CD8-positive, alpha-beta T cell (primary cell): ENCODE measurements at regions of chr16 and their contacts with region 1.

Region 1: DNA sequence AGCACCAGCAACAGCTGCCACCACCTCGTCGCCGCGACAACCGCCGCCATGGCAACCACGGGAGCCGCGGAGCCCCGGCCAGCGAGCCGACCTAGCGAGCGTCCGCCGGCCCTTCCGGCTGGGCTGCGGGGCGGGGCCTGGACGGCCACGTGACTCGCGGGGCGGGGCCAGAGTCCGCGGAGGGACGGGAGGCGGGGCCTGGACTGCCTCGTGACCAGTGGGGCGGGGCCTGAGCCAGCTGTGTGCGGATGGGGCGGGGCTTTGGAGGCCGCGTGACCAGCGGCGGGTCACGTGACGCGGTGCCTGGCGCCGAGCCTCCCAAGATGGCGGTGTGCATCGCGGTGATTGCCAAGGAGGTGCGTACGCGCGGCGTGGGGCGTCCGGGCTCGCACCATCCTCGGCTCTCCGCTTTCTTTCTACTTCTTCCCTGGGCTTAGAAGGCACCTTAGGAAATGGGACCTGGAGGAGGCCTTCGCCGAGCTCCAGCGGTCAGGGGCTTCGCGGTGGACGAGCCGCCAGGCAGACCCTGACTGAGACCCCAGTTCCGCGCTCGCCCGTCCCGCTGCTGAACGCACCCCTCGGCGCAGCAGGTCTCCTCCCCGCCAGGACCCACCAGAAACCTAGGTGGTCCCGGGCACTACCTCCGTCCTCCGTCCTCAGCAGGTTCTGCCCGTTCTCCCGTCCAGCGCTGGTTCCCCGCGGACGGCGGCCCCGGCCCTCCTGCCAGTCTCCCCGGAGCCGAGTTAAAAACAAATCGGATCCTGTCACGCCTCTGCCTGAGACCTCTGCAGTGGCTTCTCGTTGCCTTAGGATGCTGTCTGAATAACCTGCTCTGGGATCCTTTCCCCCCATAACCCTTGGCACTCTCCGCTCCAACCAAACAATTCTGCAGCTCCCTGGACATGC is at the starts of genes GALNS and TRAPPC2L:
- DNase-seq: peak; percentile 97 to 100 (median 99)
- ATAC-seq: peak; percentile 88
- H3K4me3 ChIP-seq: peak within 1 kb of the TSS; percentile 91 to 97
- H3K4me3 Mint-ChIP-seq: peak within 1 kb of the TSS; percentile 98
- H3K27ac ChIP-seq: peak within 1 kb of the TSS; percentile 74 to 83
- H3K27ac Mint-ChIP-seq: peak within 1 kb of the TSS; percentile 92
- H3K4me1 ChIP-seq: peaks cover 33% of the 10 kb centered on the region
- H3K4me1 Mint-ChIP-seq: peaks cover 39% of the 10 kb centered on the region
- H3K27me3 ChIP-seq: no peaks in the 10 kb centered on the region
- H3K27me3 Mint-ChIP-seq: no peaks in the 10 kb centered on the region
- CTCF ChIP-seq: no peak
- total RNA-seq, gene GALNS: 16.0 to 20.0 TPM
- total RNA-seq, gene TRAPPC2L: 53.4 to 56.5 TPM

Region 2: DNA sequence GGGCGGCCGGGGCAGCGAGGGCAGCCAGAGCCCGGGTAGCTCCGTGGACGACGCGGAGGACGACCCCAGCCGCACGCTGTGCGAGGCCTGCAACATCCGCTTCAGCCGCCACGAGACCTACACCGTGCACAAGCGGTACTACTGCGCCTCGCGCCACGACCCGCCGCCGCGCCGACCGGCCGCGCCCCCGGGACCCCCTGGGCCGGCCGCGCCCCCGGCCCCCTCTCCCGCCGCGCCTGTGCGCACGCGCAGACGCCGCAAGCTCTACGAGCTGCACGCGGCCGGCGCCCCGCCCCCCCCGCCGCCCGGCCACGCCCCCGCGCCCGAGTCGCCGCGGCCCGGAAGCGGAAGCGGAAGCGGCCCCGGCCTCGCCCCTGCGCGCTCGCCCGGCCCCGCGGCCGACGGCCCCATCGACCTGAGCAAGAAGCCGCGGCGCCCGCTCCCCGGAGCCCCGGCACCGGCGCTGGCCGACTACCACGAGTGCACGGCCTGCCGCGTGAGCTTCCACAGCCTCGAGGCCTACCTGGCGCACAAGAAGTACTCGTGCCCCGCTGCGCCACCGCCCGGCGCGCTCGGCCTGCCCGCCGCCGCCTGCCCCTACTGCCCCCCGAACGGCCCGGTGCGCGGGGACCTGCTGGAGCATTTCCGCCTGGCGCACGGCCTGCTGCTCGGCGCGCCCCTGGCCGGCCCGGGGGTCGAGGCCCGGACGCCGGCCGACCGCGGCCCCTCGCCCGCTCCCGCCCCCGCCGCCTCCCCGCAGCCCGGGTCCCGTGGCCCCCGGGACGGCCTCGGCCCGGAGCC is 322.9 kb before region 1 on chr16:
- CTCF ChIA-PET with region 1: no interaction called
- POLR2A ChIA-PET with region 1: no interaction called
- intact Hi-C with region 1: loop called in 1 of 2 experiments (anchors 2 kb)
- DNase-seq: peak; percentile 59 to 92 (median 76)
- ATAC-seq: peak; percentile 70
- H3K4me3 ChIP-seq: peak overlapping the region; percentile 15 to 57
- H3K4me3 Mint-ChIP-seq: peak overlapping the region; percentile 64
- H3K27ac ChIP-seq: peak overlapping the region in 1 of 2 experiments; percentile 58
- H3K27ac Mint-ChIP-seq: no peak overlapping the region
- H3K4me1 ChIP-seq: peaks cover 8% of the 10 kb centered on the region
- H3K4me1 Mint-ChIP-seq: peaks cover 15% of the 10 kb centered on the region
- H3K27me3 ChIP-seq: no peaks in the 10 kb centered on the region
- H3K27me3 Mint-ChIP-seq: no peaks in the 10 kb centered on the region
- CTCF ChIP-seq: no peak

Region 3: GRCh38 chr16:88737298-88738150 is 119.6 kb before region 1 on chr16:
- CTCF ChIA-PET with region 1: interaction called, 23 read pairs
- POLR2A ChIA-PET with region 1: no interaction called
- intact Hi-C with region 1: loop called in 1 of 2 experiments (anchors 1 kb)
- DNase-seq: peak; percentile 34 to 88 (median 59)
- ATAC-seq: peak; percentile 97
- H3K4me3 ChIP-seq: no peak overlapping the region
- H3K4me3 Mint-ChIP-seq: no peak overlapping the region
- H3K27ac ChIP-seq: no peak overlapping the region
- H3K27ac Mint-ChIP-seq: no peak overlapping the region
- H3K4me1 ChIP-seq: peaks cover 6% of the 10 kb centered on the region
- H3K4me1 Mint-ChIP-seq: peaks cover 2% of the 10 kb centered on the region
- H3K27me3 ChIP-seq: no peaks in the 10 kb centered on the region
- H3K27me3 Mint-ChIP-seq: no peaks in the 10 kb centered on the region
- CTCF ChIP-seq: peak; percentile 95

Region 4: DNA sequence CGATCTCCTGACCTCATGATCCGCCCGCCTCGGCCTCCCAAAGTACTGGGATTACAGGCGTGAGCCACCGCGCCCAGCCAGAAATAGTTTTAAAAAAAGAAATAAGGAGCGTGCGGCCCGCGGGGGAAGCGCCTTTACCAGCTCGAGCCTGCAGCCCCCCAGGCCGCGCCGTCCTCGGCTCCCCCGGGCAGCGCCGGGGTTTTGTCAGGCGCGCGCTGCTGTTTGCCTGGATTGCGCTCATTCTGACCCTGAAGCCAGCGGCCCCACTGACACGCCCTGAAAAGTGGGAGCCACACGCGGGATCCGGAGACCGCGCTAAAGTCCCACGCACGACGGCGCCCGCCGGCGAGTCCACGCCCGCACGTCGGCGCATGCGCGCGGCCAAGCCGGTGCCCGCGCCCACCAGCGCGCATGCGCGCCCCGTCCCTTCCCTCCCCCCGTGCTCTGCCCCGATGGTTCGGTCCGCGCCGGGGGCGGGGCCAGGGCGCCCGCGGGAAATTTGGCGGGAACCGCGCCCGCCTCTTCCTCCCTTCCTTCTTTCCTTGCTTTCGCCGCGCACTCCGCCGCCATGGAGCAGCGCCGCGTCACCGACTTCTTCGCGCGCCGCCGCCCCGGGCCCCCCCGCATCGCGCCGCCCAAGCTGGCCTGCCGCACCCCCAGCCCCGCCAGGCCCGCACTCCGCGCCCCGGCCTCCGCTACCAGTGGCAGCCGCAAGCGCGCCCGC is 53.7 kb before region 1 on chr16 and contains the start of gene CDT1:
- CTCF ChIA-PET with region 1: no interaction called
- POLR2A ChIA-PET with region 1: interaction called, 4 read pairs
- intact Hi-C with region 1: loop called in 1 of 2 experiments (anchors 2 kb)
- DNase-seq: peak; percentile 70 to 94 (median 85)
- ATAC-seq: peak; percentile 68
- H3K4me3 ChIP-seq: peak within 1 kb of the TSS; percentile 59 to 65
- H3K4me3 Mint-ChIP-seq: peak within 1 kb of the TSS; percentile 84
- H3K27ac ChIP-seq: peak within 1 kb of the TSS; percentile 44 to 59
- H3K27ac Mint-ChIP-seq: peak within 1 kb of the TSS; percentile 72
- H3K4me1 ChIP-seq: peaks cover 26% of the 10 kb centered on the region
- H3K4me1 Mint-ChIP-seq: peaks cover 20% of the 10 kb centered on the region
- H3K27me3 ChIP-seq: no peaks in the 10 kb centered on the region
- H3K27me3 Mint-ChIP-seq: no peaks in the 10 kb centered on the region
- CTCF ChIP-seq: no peak
- total RNA-seq, gene CDT1: 1.2 to 2.3 TPM

Region 5: DNA sequence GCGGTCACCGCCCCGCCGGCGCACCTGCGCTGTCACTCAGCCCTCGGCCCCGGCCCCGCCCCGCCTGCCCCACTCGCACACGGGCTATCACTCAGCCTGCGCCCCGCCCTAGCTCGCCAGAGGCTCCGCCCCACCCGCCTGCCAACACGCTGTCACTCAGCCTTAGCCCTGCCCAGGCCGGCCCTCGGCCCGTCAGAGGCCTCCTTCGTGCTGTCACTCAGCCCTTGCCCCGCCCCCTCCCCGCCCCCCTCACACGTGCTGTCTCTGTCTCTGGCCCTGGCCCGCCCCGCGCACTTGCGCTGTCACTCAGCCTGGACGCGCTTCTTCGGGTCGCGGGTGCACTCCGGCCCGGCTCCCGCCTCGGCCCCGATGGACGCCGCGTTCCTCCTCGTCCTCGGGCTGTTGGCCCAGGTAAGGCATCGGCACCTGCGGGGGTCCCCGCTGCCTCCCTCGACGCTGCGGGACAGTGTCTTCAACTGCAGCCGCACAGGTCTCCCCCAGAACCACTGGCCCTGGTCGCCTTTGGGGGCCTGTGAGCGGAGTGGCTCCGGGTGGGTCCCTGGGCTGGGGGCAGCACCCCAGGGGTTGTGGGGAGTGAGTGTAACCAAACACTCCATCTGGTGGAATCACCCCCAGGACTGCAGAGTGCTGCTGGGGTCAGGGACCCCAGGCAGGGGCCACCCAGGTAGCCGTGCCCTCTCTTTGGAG is 314.5 kb after region 1 on chr16 and contains the start of gene CDH15:
- CTCF ChIA-PET with region 1: interaction called, 8 read pairs
- POLR2A ChIA-PET with region 1: interaction called, 3 read pairs
- intact Hi-C with region 1: loop called (anchors 1 kb)
- DNase-seq: peak; percentile 83 to 98 (median 91)
- ATAC-seq: peak; percentile 96
- H3K4me3 ChIP-seq: peak within 1 kb of the TSS; percentile 35 to 50
- H3K4me3 Mint-ChIP-seq: peak within 1 kb of the TSS; percentile 69
- H3K27ac ChIP-seq: no peak within 1 kb of the TSS
- H3K27ac Mint-ChIP-seq: no peak within 1 kb of the TSS
- H3K4me1 ChIP-seq: peaks cover 29% of the 10 kb centered on the region
- H3K4me1 Mint-ChIP-seq: peaks cover 6% of the 10 kb centered on the region
- H3K27me3 ChIP-seq: peaks cover 0 to 2% of the 10 kb centered on the region in 2 experiments
- H3K27me3 Mint-ChIP-seq: no peaks in the 10 kb centered on the region
- CTCF ChIP-seq: no peak
- total RNA-seq, gene CDH15: 0.24 TPM in 1 of 2 experiments, not detected in the other

Region 6: GRCh38 chr16:89560378-89561141 is 703.5 kb after region 1 on chr16 and contains the start of gene RPL13:
- CTCF ChIA-PET with region 1: no interaction called
- POLR2A ChIA-PET with region 1: no interaction called
- intact Hi-C with region 1: loop called in 1 of 2 experiments (anchors 2 kb)
- DNase-seq: peak; percentile 81 to 97 (median 93)
- ATAC-seq: peak; percentile 89
- H3K4me3 ChIP-seq: peak within 1 kb of the TSS; percentile 73 to 90
- H3K4me3 Mint-ChIP-seq: peak within 1 kb of the TSS; percentile 89
- H3K27ac ChIP-seq: peak within 1 kb of the TSS; percentile 90 to 97
- H3K27ac Mint-ChIP-seq: peak within 1 kb of the TSS; percentile 93
- H3K4me1 ChIP-seq: peaks cover 54% of the 10 kb centered on the region
- H3K4me1 Mint-ChIP-seq: peaks cover 51% of the 10 kb centered on the region
- H3K27me3 ChIP-seq: no peaks in the 10 kb centered on the region
- H3K27me3 Mint-ChIP-seq: no peaks in the 10 kb centered on the region
- CTCF ChIP-seq: no peak
- total RNA-seq, gene RPL13: 4,632 to 4,668 TPM